Caco-2 (cell line): ENCODE measurements at regions of chr4 and their contacts with region 1.

Region 1: DNA sequence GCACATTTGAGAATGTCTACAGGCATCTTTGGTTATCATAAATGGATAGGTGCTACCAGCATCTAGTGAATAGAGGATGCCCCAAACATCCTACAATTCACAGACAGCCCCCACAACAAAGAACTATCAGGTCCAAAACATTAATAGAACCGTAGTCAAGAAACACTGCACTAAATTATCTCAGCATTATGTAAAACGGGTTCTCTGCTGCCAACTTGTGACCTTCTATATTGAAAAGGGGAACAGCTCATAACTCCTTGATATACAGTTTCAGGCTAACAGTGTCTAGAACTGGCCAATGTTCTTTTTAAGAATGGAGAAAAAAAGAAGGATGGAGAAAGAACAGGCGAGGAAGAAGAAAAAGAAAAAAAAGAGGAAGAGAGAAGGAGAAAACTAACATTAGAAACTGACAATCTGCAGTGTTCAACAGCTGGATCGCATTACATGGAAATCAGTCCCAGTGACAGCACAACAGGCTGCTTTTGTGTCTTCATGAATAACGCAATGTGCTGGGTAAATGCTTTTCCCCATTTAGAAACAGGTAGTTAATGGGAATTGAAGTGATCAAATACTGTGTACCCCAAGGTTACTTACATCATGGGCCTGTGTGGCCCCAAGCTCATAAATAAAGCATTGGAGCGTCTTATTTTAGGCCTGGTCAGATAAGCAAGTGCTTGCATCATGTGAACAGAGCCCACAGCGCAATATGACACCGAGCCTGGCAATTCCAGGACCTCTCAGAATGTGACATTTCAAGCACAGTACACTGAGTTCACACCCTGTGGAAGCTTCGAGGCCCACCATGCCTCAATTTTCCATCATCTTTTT is 339.5 kb downstream of the DHX15 start:
- DNase-seq: no peak
- H3K4me3 ChIP-seq: no peak overlapping the region
- H3K4me3 Mint-ChIP-seq: no peak overlapping the region
- H3K27ac Mint-ChIP-seq: no peak overlapping the region
- H3K4me1 ChIP-seq: 0 out of 2 replicates have a peak, but pooled peaks cover 6% of the 10 kb centered on the region
- H3K4me1 Mint-ChIP-seq: no peaks in the 10 kb centered on the region
- H3K27me3 ChIP-seq: no peaks in the 10 kb centered on the region
- H3K27me3 Mint-ChIP-seq: no peaks in the 10 kb centered on the region
- CTCF ChIP-seq: no peak

Region 2: GRCh38 chr4:23934915-23935314 is 310.0 kb before region 1 on chr4:
- CTCF ChIA-PET with region 1: no interaction called
- POLR2A ChIA-PET with region 1: no interaction called
- intact Hi-C with region 1: loop called (anchors 5 kb)
- DNase-seq: no peak
- H3K4me3 ChIP-seq: no peak overlapping the region
- H3K4me3 Mint-ChIP-seq: no peak overlapping the region
- H3K27ac Mint-ChIP-seq: no peak overlapping the region
- H3K4me1 ChIP-seq: no peaks in the 10 kb centered on the region
- H3K4me1 Mint-ChIP-seq: no peaks in the 10 kb centered on the region
- H3K27me3 ChIP-seq: no peaks in the 10 kb centered on the region
- H3K27me3 Mint-ChIP-seq: peaks cover 5% of the 10 kb centered on the region
- CTCF ChIP-seq: no peak

Region 3: DNA sequence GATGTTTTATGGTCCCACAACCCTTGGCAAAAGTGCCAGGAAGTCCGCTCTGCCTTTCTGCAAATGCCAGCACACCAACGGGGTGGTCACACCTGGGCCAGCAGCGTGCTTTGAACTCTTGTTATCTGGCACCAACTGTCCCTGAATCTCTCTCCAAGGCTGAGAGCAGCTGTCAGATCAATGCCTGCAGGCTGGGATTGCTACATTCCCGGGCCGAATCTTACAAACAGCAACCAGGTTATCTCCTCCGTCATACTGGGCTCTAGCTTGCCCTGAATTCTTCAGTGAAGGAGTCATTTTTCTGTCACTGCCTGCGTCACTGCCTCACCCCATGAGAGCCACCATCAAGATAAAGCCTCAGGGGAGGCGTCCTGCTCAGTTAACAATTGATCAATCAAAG is 25.7 kb before region 1 on chr4:
- CTCF ChIA-PET with region 1: no interaction called
- POLR2A ChIA-PET with region 1: no interaction called
- intact Hi-C with region 1: loop called (anchors 2 kb)
- DNase-seq: peak; percentile 56 to 70
- H3K4me3 ChIP-seq: no peak overlapping the region
- H3K4me3 Mint-ChIP-seq: peak overlapping the region; percentile 27
- H3K27ac Mint-ChIP-seq: peak overlapping the region; percentile 88
- H3K4me1 ChIP-seq: peaks cover 19% of the 10 kb centered on the region
- H3K4me1 Mint-ChIP-seq: peaks cover 14% of the 10 kb centered on the region
- H3K27me3 ChIP-seq: no peaks in the 10 kb centered on the region
- H3K27me3 Mint-ChIP-seq: no peaks in the 10 kb centered on the region
- CTCF ChIP-seq: no peak

Region 4: GRCh38 chr4:24298911-24299310 is 54.0 kb after region 1 on chr4:
- CTCF ChIA-PET with region 1: no interaction called
- POLR2A ChIA-PET with region 1: no interaction called
- intact Hi-C with region 1: no loop called
- DNase-seq: no peak
- H3K4me3 ChIP-seq: no peak overlapping the region
- H3K4me3 Mint-ChIP-seq: no peak overlapping the region
- H3K27ac Mint-ChIP-seq: no peak overlapping the region
- H3K4me1 ChIP-seq: no peaks in the 10 kb centered on the region
- H3K4me1 Mint-ChIP-seq: no peaks in the 10 kb centered on the region
- H3K27me3 ChIP-seq: no peaks in the 10 kb centered on the region
- H3K27me3 Mint-ChIP-seq: peaks cover 11% of the 10 kb centered on the region
- CTCF ChIP-seq: no peak